Sigmoid colon (tissue), 7 donors: ENCODE measurements at regions of chr16 and their contacts with region 1.

Region 1: DNA sequence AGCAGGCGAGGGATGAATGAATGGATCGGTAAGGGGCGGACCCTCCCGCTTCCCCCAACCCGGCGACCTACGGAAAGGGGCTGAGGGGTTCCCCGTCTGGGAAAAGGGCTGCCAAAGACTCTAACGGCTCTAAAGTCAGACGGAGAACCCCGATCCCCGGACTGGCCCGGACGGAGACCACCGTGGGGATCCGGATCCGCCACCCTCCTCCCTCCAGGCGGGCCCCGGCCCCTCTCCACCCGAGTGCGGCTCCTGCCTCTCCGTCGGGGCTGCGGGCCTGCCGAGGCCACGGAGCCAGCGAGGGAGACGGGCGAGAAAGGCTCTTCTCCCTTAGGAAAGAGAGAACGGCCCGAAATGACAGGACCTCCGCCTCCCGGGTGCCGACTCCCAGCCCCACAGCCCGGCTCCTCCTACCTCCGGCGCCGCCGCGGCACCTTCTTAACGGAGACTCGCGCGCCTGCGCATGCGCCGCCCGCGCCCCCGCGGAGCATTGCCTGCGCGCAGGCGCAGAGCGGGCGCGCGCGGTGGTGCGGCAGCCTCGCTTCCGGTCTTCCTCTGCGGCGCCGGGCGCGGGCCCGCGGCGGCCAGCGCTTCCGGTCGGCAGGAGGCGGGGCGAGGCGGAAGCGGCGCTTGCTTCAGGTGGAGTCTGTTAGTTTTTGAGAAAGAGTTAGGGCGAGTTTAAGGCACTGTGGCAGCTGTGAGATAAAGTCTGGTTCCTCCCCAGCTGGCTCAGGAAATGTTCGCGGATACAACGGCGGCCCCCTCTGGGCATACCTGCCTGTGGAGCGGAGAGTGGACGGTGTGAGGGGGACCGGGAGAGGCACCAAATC is at the start of gene SLX4:
- DNase-seq: peak; percentile 95
- H3K4me3 ChIP-seq: peak within 1 kb of the TSS; percentile 85 to 98 (median 94)
- H3K27ac ChIP-seq: peak within 1 kb of the TSS; percentile 71 to 88 (median 82)
- H3K4me1 ChIP-seq: peaks cover 0 to 24% (median 16%) of the 10 kb centered on the region in 4 donors
- H3K27me3 ChIP-seq: no peaks in the 10 kb centered on the region
- CTCF ChIP-seq: no peak
- EP300 ChIP-seq: no peak
- POLR2A ChIP-seq: peak in 1 of 2 donors; percentile 36
- total RNA-seq, gene SLX4: 2.1 to 3.9 (median 2.6) TPM

Region 2: DNA sequence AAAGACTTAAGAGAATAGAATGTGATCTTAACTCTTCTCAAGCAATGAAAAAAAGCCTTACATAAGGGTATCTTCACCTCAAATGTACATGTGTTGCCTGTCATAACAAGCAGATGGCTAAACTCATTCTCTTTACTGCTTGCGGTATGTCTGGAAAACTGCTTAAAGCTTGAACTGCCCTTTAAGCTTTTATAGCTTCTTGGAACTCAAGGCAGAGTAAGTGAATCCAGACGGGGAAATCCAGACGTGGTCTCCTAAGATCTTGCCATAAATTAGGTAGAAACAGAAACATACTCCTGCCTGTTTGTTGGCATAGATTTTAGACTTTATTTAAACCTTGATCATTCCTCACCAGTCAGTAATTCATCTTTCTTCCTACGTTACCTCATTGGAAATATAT is 90.9 kb before region 1 on chr16:
- intact Hi-C with region 1: loop called (anchors 10 kb)
- DNase-seq: peak; percentile 60
- H3K4me3 ChIP-seq: peak overlapping the region in 1 of 4 donors; percentile 28
- H3K27ac ChIP-seq: peak overlapping the region; percentile 58 to 90 (median 82)
- H3K4me1 ChIP-seq: peaks cover 0 to 32% (median 23%) of the 10 kb centered on the region in 4 donors
- H3K27me3 ChIP-seq: no peaks in the 10 kb centered on the region
- CTCF ChIP-seq: no peak
- EP300 ChIP-seq: peak in 2 of 4 donors; percentile 47 to 83
- POLR2A ChIP-seq: no peak